Calu3 (cell line): ENCODE measurements at regions of chr7 and their contacts with region 1.

Region 1: GRCh38 chr7:8277394-8277982 is 15.5 kb upstream of the ICA1 start:
- DNase-seq: peak; percentile 44
- H3K4me3 Mint-ChIP-seq: no peak overlapping the region
- H3K27ac Mint-ChIP-seq: no peak overlapping the region
- H3K4me1 Mint-ChIP-seq: peaks cover 18% of the 10 kb centered on the region
- H3K27me3 Mint-ChIP-seq: no peaks in the 10 kb centered on the region
- CTCF ChIP-seq: peak; percentile 18

Region 2: DNA sequence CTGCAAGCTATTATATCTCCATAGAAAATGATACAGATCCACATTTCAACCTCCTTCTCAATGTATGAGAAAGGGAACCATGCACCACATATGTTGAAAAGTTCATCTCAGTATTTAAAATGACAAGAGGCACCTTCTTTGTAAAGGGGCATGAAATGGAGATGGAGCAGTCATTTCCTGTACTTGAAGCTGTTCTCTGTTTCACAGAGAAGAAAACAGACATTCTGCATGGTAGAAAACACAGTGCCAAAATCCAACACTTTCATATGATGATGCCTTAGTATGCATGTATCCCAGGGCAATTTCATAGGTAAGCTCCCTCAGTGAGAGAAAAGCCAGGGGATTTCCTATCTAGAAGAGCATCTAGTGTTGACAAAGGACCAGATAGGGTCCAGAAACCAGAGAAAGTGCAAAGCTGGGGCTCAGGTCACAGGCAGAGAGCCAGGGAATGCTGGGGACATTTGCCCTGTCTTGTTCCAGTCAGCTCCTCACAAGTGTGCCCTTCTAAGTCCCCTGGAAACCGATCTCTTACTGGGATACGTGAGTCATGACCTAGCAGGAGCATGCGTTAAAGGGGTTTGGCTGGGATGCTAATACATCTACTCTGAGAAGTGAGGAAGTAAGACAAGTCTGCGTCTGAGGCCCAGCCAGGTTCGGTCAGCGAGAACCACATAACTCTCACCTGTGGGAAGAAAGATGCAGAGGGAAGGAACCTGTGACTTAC is 134.2 kb before region 1 on chr7:
- CTCF ChIA-PET with region 1: no interaction called
- intact Hi-C with region 1: no loop called
- DNase-seq: no peak
- H3K4me3 Mint-ChIP-seq: no peak overlapping the region
- H3K27ac Mint-ChIP-seq: no peak overlapping the region
- H3K4me1 Mint-ChIP-seq: no peaks in the 10 kb centered on the region
- H3K27me3 Mint-ChIP-seq: no peaks in the 10 kb centered on the region
- CTCF ChIP-seq: no peak

Region 3: DNA sequence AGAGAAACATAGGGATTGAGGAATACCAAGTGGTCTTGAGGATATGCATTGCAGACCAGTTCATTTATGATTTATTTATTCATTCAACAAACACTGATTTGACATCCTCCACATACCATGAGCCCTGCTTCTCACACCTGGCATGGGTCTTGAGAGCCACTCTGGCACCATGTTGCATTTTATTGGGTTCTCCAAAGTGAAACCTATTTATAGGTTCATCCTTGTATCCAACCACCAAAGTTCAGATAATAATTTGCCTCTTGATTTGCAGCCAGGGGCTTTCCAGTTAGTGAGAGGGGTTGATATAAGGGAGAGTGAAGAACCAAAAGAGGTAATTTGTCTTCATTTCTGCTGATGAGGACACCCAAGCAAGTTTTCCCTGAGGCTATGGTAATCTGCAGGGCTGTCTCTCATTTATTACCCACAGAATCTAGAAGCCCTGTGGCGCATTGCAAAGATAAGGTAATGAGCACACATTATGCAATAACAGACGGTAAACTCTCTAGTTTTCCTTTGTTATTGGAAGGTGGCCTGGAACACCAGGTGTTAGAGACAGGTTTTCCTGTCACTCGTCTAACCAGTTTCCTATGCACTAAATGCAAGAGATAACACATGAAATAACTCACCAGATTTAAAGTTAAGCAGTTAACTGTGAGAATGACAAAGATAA is 13.3 kb after region 1 on chr7:
- CTCF ChIA-PET with region 1: interaction called, 36 read pairs
- intact Hi-C with region 1: loop called (anchors 2 kb)
- DNase-seq: peak; percentile 44
- H3K4me3 Mint-ChIP-seq: no peak overlapping the region
- H3K27ac Mint-ChIP-seq: no peak overlapping the region
- H3K4me1 Mint-ChIP-seq: peaks cover 35% of the 10 kb centered on the region
- H3K27me3 Mint-ChIP-seq: no peaks in the 10 kb centered on the region
- CTCF ChIP-seq: no peak